Left ventricle myocardium inferior (tissue), 1 donor: ENCODE measurements at regions of chr18 and their contacts with region 1.

Region 1: GRCh38 chr18:27616324-27616723 is 431.2 kb upstream of the CHST9 start:
- DNase-seq: no peak
- H3K4me3 ChIP-seq: no peak overlapping the region
- H3K27ac ChIP-seq: no peak overlapping the region
- H3K4me1 ChIP-seq: peaks cover 16% of the 10 kb centered on the region
- H3K27me3 ChIP-seq: no peaks in the 10 kb centered on the region
- CTCF ChIP-seq: no peak

Region 2: GRCh38 chr18:27652480-27653121 is 36.3 kb after region 1 on chr18:
- intact Hi-C with region 1: no loop called
- DNase-seq: no peak
- H3K4me3 ChIP-seq: peak overlapping the region; percentile 26
- H3K27ac ChIP-seq: peak overlapping the region; percentile 37
- H3K4me1 ChIP-seq: peaks cover 13% of the 10 kb centered on the region
- H3K27me3 ChIP-seq: no peaks in the 10 kb centered on the region
- CTCF ChIP-seq: no peak

Region 3: DNA sequence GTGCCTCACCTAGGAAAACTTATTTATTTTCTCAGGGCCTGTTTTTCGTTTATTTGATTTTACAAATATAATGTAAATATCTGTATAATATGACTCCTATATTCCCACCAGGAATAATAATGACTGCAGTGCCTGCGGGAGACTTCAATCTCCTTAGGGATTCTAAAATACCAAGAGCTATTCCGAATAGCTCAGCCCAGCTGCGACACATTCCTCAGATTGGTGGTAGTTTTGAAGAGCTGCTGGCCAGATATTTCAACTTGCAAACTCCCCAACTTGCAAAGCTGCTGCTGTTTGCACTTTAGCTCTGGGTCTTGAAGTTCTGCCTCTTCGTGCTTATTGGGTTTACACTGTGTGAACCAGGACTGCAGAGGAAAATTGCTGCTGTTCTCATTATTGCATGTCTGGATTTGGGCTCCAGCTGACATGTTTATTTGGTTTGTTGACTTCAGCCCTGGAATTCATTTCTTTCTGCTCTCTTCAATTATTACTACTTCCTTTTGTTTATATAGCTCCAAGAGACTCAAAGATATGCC is 49.0 kb after region 1 on chr18:
- intact Hi-C with region 1: loop called (anchors 5 kb)
- DNase-seq: no peak
- H3K4me3 ChIP-seq: no peak overlapping the region
- H3K27ac ChIP-seq: no peak overlapping the region
- H3K4me1 ChIP-seq: peaks cover 7% of the 10 kb centered on the region
- H3K27me3 ChIP-seq: no peaks in the 10 kb centered on the region
- CTCF ChIP-seq: no peak

Region 4: DNA sequence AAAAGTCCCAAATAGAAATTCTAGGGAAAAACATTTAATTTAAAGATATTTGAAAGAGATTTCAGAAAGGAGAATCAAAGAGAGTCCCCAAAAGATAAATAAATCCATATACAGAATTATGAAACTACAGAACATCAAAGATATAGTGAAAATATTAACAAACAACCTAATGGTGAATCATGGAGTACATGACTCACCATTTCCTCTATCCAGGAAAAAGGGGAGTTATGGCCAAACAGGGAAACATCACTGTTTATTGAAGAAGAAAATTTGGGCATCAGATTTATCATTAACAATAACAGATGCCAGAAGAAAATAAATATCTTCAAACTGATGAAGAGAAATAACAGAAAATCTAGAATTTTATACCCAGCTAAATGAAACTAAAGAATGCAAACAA is 112.3 kb after region 1 on chr18:
- intact Hi-C with region 1: no loop called
- DNase-seq: no peak
- H3K4me3 ChIP-seq: no peak overlapping the region
- H3K27ac ChIP-seq: no peak overlapping the region
- H3K4me1 ChIP-seq: no peaks in the 10 kb centered on the region
- H3K27me3 ChIP-seq: no peaks in the 10 kb centered on the region
- CTCF ChIP-seq: no peak